ENCODE measurements at regions of chr13 and their contacts with region 1.

Region 1: GRCh38 chr13:19587635-19588300 is 26.4 kb upstream of the TPTE2 start:
- DNase-seq: peak; percentile 70
- ATAC-seq: peak; percentile 93
- H3K4me3 ChIP-seq: peak overlapping the region in 2 of 3 experiments; percentile 56 to 68; a peak in 4 of 6 replicates
- H3K27ac ChIP-seq: no peak overlapping the region
- H3K4me1 ChIP-seq: peaks cover 37% of the 10 kb centered on the region
- H3K27me3 ChIP-seq: no peaks in the 10 kb centered on the region
- CTCF ChIP-seq: peak; percentile 85
- EP300 ChIP-seq: no peak
- POLR2A ChIP-seq: no peak
- RAD21 ChIP-seq: 0 out of 2 replicates have a peak, but pooled peaks have one; percentile 13

Region 2: DNA sequence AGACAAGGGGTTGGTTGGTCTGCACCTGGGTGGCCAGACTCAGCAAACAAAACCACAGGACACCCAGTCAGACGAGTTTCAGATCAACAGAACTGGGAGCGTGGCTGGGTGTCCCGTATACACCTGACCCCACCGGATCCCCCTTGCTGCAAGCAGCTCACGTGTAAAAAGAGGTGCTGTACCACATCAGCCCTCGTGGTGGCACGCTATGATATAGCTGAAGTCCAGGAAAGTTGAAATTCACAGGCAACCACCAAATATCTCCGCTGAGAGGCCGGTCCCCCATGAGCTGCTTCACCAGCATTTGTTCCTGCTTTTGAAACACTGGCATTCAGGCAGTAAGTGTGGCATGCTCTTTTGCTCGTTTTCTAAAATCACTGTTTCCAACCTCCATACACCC is 498.5 kb before region 1 on chr13:
- CTCF ChIA-PET with region 1: no interaction called
- POLR2A ChIA-PET with region 1: no interaction called
- in situ Hi-C with region 1: no loop called
- intact Hi-C with region 1: no loop called
- DNase-seq: peak; percentile 9
- ATAC-seq: peak; percentile 92
- H3K4me3 ChIP-seq: no peak overlapping the region
- H3K27ac ChIP-seq: no peak overlapping the region
- H3K4me1 ChIP-seq: no peaks in the 10 kb centered on the region
- H3K27me3 ChIP-seq: no peaks in the 10 kb centered on the region
- CTCF ChIP-seq: peak; percentile 60
- EP300 ChIP-seq: no peak
- POLR2A ChIP-seq: no peak
- RAD21 ChIP-seq: no peak

Region 3: DNA sequence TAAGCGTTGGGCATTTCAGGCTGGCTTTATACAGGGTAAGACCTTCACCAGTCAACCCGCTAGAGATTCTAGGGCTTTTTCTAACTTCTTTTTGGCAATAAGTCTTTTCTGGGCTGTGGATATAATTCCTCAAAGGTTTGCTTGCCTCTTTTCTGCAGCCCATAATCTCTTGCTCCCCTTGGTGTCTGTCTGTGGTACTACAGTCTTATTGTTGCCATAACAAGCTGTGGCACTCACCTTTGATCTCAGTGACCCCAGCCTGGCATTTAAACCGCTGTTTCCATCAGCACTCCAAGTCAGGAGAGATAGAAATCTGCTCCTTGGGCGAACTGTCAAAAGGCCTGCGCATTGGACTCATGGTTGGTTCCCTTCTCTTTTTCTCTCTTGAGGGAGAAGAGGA is 31.2 kb after region 1 on chr13:
- CTCF ChIA-PET with region 1: interaction called, 22 read pairs
- POLR2A ChIA-PET with region 1: no interaction called
- in situ Hi-C with region 1: no loop called
- intact Hi-C with region 1: no loop called
- DNase-seq: peak; percentile 79
- ATAC-seq: peak; percentile 95
- H3K4me3 ChIP-seq: no peak overlapping the region
- H3K27ac ChIP-seq: peak overlapping the region; percentile 17
- H3K4me1 ChIP-seq: peaks cover 36% of the 10 kb centered on the region
- H3K27me3 ChIP-seq: no peaks in the 10 kb centered on the region
- CTCF ChIP-seq: peak; percentile 79
- EP300 ChIP-seq: no peak
- POLR2A ChIP-seq: no peak
- RAD21 ChIP-seq: peak; percentile 64

Region 4: DNA sequence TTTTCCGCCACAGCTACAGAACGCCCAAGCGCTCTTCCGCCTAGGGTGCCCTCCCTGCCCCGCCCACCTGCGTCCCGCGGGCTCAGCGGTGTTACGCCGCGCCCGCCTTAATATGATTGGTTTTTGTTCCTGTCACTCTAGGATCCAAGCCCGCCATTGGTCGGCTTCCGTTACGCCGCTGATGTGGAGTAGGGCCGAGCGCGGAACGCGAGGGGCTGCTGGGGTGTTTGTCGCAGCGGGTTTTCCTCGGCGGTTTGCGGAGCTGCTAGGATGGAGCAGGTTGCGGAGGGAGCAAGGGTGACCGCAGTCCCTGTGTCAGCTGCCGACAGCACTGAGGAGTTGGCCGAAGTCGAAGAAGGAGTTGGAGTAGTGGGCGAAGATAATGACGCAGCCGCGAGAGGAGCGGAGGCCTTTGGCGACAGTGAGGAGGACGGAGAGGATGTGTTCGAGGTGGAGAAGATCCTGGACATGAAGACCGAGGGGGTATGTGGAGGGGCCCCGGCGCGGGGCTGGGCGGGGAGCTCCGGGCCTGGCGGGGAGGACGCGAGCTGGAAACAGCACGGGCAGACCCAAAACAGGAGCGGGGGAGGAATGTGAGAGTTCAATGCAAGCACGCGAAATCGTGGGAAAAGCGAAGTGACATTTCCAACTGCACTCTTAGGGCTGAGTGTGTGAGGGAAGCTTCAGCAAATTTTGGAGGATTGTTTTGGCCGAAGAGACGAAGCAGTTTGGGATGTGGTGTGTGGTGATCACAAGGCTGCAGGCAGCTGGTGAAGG is 45.9 kb after region 1 on chr13 and contains the start of gene MPHOSPH8:
- CTCF ChIA-PET with region 1: no interaction called
- POLR2A ChIA-PET with region 1: interaction called, 5 read pairs
- in situ Hi-C with region 1: no loop called
- intact Hi-C with region 1: loop called (anchors 5 kb)
- DNase-seq: peak; percentile 88
- ATAC-seq: peak; percentile 98
- H3K4me3 ChIP-seq: peak within 1 kb of the TSS; percentile 88 to 92 (median 88)
- H3K27ac ChIP-seq: peak within 1 kb of the TSS; percentile 77
- H3K4me1 ChIP-seq: peaks cover 30% of the 10 kb centered on the region
- H3K27me3 ChIP-seq: peaks cover 0 to 4% of the 10 kb centered on the region in 2 experiments; a peak in 1 of 5 replicates
- CTCF ChIP-seq: no peak; the same call in 1 of the 2 replicates
- EP300 ChIP-seq: no peak
- POLR2A ChIP-seq: peak; percentile 53 to 69
- RAD21 ChIP-seq: no peak
- total RNA-seq, gene MPHOSPH8: 20.9 and 27.6 TPM in 2 replicates

Region 5: DNA sequence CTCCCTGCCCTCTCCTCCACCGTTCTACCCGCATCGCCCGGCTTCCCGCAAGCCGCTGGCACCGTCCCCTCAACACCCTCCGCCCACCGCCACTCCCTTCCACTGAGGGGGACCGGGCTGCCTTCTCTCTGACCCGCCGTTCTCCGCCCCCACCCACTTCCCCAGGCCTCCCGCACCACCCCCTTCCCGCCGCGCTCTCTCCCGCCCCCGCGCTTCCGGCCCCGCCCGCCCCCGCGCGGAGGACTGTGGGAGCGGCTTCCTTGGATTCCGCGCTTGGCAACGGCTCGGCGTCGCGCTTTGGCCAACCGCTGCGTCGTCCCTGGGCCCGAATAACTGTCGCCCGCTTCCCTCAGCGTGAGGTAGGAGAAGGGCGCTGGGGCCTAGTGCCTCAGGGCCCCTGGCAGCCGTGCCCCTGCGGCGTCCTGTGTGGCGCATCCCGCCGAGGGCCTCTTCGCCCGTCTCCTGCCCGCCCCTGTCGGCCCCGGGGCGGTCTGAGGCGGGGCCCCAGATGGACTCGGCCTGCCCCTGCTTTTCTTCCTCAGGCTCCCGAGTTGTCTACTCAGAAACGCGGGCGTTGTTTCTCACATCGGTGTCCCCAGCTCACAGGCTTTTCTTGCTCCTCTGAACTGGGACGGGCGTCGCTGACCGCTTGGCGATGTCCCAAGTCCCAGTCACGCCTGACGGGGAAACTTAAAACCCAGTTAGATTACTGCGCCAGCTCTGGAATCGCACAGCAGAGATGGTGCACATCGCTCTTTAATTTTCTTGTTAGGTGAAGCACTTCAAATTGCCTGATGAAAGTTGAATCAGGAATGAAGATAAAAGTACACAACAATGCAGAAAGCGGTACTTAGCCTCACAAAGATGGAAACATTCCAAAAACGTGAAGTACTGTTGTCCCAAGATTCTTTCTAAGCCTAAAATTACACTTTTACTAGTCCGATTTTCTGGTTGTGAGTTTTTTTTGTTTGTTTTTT is 979.4 kb after region 1 on chr13 and contains the start of gene IFT88:
- CTCF ChIA-PET with region 1: no interaction called
- POLR2A ChIA-PET with region 1: no interaction called
- in situ Hi-C with region 1: no loop called
- intact Hi-C with region 1: no loop called
- DNase-seq: peak; percentile 81
- ATAC-seq: peak; percentile 93
- H3K4me3 ChIP-seq: peak within 1 kb of the TSS; percentile 65 to 74 (median 72)
- H3K27ac ChIP-seq: peak within 1 kb of the TSS; percentile 93
- H3K4me1 ChIP-seq: peaks cover 24% of the 10 kb centered on the region
- H3K27me3 ChIP-seq: no peaks in the 10 kb centered on the region
- CTCF ChIP-seq: no peak; the same call in 1 of the 2 replicates
- EP300 ChIP-seq: 0 out of 4 replicates have a peak, but pooled peaks of 1 of the 2 experiments have one; percentile 20
- POLR2A ChIP-seq: peak; percentile 59 to 84; a peak in 3 of 4 replicates
- RAD21 ChIP-seq: peak; percentile 67
- total RNA-seq, gene IFT88: 19.8 and 19.9 TPM in 2 replicates

Measured in HepG2 (cell line).